Pancreas (tissue), 10 donors: ENCODE measurements at regions of chr19 and their contacts with region 1.

Region 1: GRCh38 chr19:28242297-28242927 is 970.5 kb downstream of the UQCRFS1 start:
- DNase-seq: peak in 2 of 6 donors; percentile 5 to 24
- ATAC-seq: peak in 2 of 4 donors; percentile 41 to 51
- H3K4me3 ChIP-seq: no peak overlapping the region
- H3K27ac ChIP-seq: no peak overlapping the region
- H3K4me1 ChIP-seq: no peaks in the 10 kb centered on the region
- H3K27me3 ChIP-seq: no peaks in the 10 kb centered on the region
- CTCF ChIP-seq: peak; percentile 40 to 63 (median 54)

Region 2: GRCh38 chr19:27974082-27974513 is 268.3 kb before region 1 on chr19:
- intact Hi-C with region 1: loop called in 1 of 3 experiments (anchors 10 kb)
- DNase-seq: peak in 4 of 6 donors; percentile 23 to 56 (median 45)
- ATAC-seq: peak; percentile 71 to 96 (median 88)
- H3K4me3 ChIP-seq: no peak overlapping the region
- H3K27ac ChIP-seq: no peak overlapping the region
- H3K4me1 ChIP-seq: no peaks in the 10 kb centered on the region
- H3K27me3 ChIP-seq: no peaks in the 10 kb centered on the region
- CTCF ChIP-seq: peak; percentile 24 to 61 (median 54)

Region 3: DNA sequence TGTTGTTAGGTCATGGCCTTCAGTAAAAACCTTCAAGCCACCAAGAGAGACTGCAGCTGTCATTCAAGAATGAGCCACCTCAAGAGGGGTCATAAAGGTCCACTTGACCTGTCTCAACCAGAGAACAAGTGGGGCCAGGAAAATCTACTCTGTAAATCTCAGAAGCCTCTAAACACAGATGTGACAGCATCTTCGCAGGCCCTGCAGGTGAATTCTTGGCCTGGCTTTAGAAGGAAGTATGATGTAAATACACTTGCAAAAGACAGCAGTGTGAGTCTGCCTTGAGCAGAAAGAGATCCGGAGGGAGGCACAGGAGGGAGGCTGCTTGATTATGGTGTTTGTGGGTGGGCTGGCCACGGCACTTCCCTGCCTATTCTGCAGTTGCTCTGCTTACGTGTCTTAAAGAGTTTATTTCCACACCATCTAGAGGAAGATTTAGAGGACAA is 112.3 kb before region 1 on chr19:
- intact Hi-C with region 1: no loop called
- DNase-seq: no peak
- ATAC-seq: no peak
- H3K4me3 ChIP-seq: no peak overlapping the region
- H3K27ac ChIP-seq: no peak overlapping the region
- H3K4me1 ChIP-seq: no peaks in the 10 kb centered on the region
- H3K27me3 ChIP-seq: no peaks in the 10 kb centered on the region
- CTCF ChIP-seq: no peak

Region 4: DNA sequence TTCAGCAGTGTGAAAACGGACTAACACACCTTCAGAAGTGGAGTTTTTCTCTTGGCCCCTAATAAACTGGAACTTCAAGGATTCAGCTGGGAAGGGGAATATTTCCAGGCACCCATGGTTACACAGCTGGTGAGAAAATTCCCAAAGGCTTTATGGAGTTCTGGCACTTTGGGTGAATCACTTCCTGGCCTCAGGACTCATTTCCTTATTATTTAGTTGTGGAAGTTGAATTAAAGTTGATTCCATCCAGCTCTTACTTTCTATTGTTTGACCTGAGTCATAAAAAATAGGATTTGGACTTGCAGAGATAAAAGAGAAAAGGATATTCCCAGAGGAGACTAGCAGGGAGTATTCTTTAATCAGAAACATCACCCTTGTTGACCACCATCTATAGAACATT is 88.4 kb after region 1 on chr19:
- intact Hi-C with region 1: loop called in 1 of 3 experiments (anchors 10 kb)
- DNase-seq: no peak
- ATAC-seq: no peak
- H3K4me3 ChIP-seq: no peak overlapping the region
- H3K27ac ChIP-seq: no peak overlapping the region
- H3K4me1 ChIP-seq: no peaks in the 10 kb centered on the region
- H3K27me3 ChIP-seq: no peaks in the 10 kb centered on the region
- CTCF ChIP-seq: no peak